Endothelial cell of umbilical vein (primary cell): ENCODE measurements at regions of chr14 and their contacts with region 1.

Region 1: GRCh38 chr14:58216544-58216943 is 16.6 kb downstream of the ACTR10 start:
- DNase-seq: no peak
- H3K4me3 ChIP-seq: no peak overlapping the region
- H3K27ac ChIP-seq: no peak overlapping the region
- H3K4me1 ChIP-seq: no peaks in the 10 kb centered on the region
- H3K27me3 ChIP-seq: no peaks in the 10 kb centered on the region
- CTCF ChIP-seq: no peak
- POLR2A ChIP-seq: no peak

Region 2: DNA sequence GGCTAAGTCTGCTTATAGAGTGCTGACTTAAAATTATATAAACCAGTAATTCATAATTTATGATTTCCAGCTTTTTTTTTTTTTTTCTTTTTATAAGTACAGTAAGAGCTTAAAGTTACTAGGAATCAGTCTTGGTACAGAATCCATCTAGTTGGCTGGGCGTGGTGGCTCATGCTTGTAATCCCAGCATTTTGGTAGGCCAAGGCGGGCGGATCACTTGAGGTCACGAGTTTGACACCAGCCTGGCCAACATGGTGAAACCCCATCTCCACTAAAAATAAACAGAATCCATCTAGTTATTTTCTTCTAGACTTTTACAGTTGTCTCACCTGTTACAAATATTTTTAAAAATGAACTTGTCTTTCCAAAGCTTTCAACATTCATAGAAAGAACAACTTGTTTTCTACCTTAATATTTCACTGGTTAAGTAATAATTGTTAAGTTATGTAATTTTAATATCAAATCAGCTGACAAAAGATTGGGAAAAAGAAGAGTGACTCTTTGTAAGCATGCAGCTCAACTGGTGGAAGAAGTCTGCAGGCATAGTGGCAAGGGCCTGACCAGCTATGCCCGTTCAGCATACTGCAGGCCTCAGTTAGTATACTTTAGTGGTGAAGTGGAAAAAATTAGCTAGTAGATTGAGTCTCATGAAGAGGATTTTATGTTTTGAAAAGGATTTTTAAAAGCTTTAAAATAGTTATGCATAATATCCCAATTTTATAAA is 10.7 kb after region 1 on chr14:
- CTCF ChIA-PET with region 1: interaction called, 5 read pairs
- POLR2A ChIA-PET with region 1: interaction called, 12 read pairs
- dilution Hi-C with region 1: no loop called
- intact Hi-C with region 1: no loop called
- DNase-seq: no peak
- H3K4me3 ChIP-seq: no peak overlapping the region
- H3K27ac ChIP-seq: no peak overlapping the region
- H3K4me1 ChIP-seq: no peaks in the 10 kb centered on the region
- H3K27me3 ChIP-seq: no peaks in the 10 kb centered on the region
- CTCF ChIP-seq: no peak
- POLR2A ChIP-seq: no peak

Region 3: DNA sequence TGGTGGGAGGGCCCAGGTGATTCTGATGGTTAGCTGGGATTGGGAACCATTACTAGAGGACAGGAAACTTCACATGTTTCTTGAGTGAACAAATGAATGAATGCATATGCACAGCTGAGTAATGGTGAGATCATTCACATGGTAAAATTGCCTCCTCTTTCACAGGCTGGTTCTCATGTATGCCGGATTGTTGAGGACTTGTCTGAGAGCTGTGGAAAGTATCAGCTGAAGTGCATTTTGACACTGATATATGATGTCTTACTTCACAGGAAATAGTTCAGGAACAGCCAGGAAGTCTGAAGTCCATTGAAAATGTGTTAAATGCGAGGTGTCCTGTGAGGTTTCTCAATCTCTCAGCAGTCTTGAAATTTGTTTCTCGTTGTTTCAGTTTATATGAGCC is 343.7 kb after region 1 on chr14:
- CTCF ChIA-PET with region 1: no interaction called
- POLR2A ChIA-PET with region 1: no interaction called
- dilution Hi-C with region 1: no loop called
- intact Hi-C with region 1: no loop called
- DNase-seq: peak; percentile 64
- H3K4me3 ChIP-seq: no peak overlapping the region
- H3K27ac ChIP-seq: no peak overlapping the region
- H3K4me1 ChIP-seq: peaks cover 4% of the 10 kb centered on the region
- H3K27me3 ChIP-seq: no peaks in the 10 kb centered on the region
- CTCF ChIP-seq: no peak
- POLR2A ChIP-seq: no peak